Activated CD8-positive, alpha-beta T cell treated with anti-CD3 and anti-CD28 coated beads for 36 hours (primary cell): ENCODE measurements at regions of chr13 and their contacts with region 1.

Region 1: DNA sequence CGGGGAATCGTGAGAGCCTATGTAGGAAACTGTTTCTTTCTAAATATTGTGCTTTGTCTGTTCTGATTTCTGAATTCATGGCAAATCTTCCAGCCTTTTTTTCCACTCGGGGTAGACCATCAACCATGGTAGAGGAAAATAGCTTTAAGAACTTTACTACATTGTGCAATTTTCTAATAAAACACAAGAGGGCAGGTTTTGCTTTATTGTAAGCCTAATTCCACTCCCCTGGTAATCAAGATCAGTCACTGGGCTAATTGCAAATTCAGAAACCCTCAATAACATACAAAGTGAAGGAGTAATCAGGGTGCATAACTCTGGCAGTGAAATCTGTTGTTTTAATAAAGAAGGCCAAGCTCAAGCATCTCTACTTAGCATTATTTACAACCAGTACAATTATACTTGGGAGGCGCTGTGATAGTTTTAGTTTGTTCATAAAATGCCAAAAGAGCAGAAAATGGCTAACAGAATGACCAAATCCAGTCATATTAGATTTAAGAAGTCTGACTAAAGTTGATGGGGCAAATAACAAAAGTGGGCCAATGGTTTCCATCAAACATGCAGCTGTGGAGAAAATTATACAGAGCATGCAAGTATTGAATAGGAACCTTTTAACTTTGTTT is 43.8 kb downstream of the DCT start:
- DNase-seq: no peak
- ATAC-seq: peak; percentile 66
- H3K4me3 Mint-ChIP-seq: no peak overlapping the region
- H3K27ac Mint-ChIP-seq: no peak overlapping the region
- H3K4me1 Mint-ChIP-seq: peaks cover 33% of the 10 kb centered on the region
- H3K27me3 Mint-ChIP-seq: no peaks in the 10 kb centered on the region
- CTCF ChIP-seq: peak; percentile 74

Region 2: GRCh38 chr13:94416454-94417080 is 19.1 kb before region 1 on chr13:
- CTCF ChIA-PET with region 1: interaction called, 44 read pairs
- POLR2A ChIA-PET with region 1: interaction called, 4 read pairs
- intact Hi-C with region 1: no loop called
- DNase-seq: no peak
- ATAC-seq: no peak
- H3K4me3 Mint-ChIP-seq: no peak overlapping the region
- H3K27ac Mint-ChIP-seq: no peak overlapping the region
- H3K4me1 Mint-ChIP-seq: peaks cover 44% of the 10 kb centered on the region
- H3K27me3 Mint-ChIP-seq: peaks cover 2% of the 10 kb centered on the region
- CTCF ChIP-seq: no peak

Region 3: GRCh38 chr13:94549232-94550061 is 113.7 kb after region 1 on chr13:
- CTCF ChIA-PET with region 1: interaction called, 26 read pairs
- POLR2A ChIA-PET with region 1: interaction called, 6 read pairs
- intact Hi-C with region 1: loop called (anchors 5 kb)
- DNase-seq: peak; percentile 95
- ATAC-seq: peak; percentile 93
- H3K4me3 Mint-ChIP-seq: peak overlapping the region; percentile 85
- H3K27ac Mint-ChIP-seq: peak overlapping the region; percentile 98
- H3K4me1 Mint-ChIP-seq: peaks cover 15% of the 10 kb centered on the region
- H3K27me3 Mint-ChIP-seq: peaks cover 3% of the 10 kb centered on the region
- CTCF ChIP-seq: no peak

Region 4: DNA sequence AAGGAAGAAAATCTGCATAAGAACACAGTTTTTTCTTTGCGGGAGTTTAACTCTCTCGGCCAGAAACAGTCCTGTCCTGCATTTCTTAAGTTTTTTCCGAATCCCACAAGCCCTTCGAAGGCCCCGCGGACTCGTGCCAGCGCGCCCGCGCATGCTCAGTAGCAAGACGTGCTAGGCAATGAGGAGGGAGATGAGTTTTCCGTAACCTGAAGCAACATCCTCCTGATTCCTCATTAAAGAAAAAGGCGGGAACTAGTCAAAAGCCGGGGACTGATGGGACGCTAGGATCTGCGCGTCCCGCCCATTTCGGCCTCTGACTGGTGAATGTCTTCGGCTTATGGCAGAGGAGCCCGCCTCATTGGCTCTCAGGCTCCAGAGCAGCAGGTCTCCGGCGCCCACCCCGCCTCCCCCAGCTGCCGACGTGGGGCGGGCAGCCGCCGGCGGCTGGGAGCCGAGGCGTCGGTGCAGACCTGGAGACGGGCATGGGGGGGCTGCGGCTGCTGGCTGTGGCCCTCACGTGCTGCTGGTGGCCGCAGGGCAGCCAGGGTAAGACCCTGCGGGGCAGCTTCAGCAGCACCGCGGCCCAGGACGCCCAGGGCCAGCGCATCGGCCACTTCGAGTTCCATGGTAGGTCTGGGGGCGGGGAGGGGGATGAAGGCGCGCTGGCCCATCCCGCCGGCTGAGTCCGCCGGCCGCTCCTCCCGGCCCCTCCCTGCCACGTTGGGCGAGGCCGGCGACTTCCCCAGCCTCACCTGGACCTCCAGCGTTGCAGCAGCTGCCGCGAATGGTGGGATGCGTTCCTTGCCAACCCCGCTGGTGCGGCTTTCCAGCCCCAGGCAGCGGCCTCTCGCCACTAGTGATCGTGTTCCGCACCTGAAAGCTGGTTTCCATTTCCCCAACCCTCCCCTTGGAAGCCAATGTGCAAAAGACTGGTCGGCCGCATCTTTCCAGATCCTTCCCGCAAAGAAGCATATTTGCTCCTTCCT is 166.0 kb after region 1 on chr13 and contains the start of gene GPR180:
- CTCF ChIA-PET with region 1: interaction called, 12 read pairs
- POLR2A ChIA-PET with region 1: no interaction called
- intact Hi-C with region 1: no loop called
- DNase-seq: peak; percentile 97
- ATAC-seq: peak; percentile 100
- H3K4me3 Mint-ChIP-seq: peak within 1 kb of the TSS; percentile 84
- H3K27ac Mint-ChIP-seq: peak within 1 kb of the TSS; percentile 87
- H3K4me1 Mint-ChIP-seq: peaks cover 32% of the 10 kb centered on the region
- H3K27me3 Mint-ChIP-seq: no peaks in the 10 kb centered on the region
- CTCF ChIP-seq: no peak
- total RNA-seq, gene GPR180: 7.5 to 7.7 TPM